ENCODE measurements at regions of chr4 and their contacts with region 1.

Region 1: DNA sequence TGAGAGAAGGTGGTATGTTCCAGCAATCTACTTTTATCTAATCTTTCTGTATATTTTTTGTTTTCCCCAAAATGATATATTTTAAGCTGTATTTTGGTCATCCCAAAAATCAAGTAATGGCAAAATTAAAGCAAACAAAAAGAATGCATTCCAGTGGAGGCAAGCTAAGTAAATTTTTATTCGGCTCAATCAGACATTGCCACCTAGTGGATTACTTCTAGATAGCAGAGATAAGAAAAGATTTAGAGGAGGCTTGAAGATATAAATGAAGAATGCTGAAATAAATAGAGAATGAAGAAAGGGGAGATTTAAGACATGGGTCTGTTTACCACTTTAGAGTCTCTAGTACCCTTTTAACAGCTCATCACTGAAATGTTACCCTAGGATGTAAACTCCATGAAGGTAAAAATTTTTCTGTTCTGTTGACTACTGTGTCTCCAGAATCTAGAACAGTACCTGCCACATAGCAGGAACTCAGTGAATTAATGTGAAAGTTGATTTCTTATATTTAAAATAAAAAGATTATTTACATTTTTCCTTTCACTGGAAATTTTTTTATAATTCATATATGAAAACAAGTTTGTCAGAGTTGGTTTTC is 110.9 kb upstream of the ANK2 start:
- DNase-seq: peak in 2 of 4 experiments; percentile 7 to 10
- ATAC-seq: no peak
- H3K4me3 ChIP-seq: no peak overlapping the region
- H3K27ac ChIP-seq: no peak overlapping the region
- H3K4me1 ChIP-seq: no peaks in the 10 kb centered on the region
- H3K27me3 ChIP-seq: no peaks in the 10 kb centered on the region
- CTCF ChIP-seq: peak in 2 of 3 experiments; percentile 26 to 50; a peak in 3 of 6 replicates
- EP300 ChIP-seq: no peak
- POLR2A ChIP-seq: no peak
- RAD21 ChIP-seq: peak; percentile 39 to 43; a peak in 3 of 4 replicates

Region 2: DNA sequence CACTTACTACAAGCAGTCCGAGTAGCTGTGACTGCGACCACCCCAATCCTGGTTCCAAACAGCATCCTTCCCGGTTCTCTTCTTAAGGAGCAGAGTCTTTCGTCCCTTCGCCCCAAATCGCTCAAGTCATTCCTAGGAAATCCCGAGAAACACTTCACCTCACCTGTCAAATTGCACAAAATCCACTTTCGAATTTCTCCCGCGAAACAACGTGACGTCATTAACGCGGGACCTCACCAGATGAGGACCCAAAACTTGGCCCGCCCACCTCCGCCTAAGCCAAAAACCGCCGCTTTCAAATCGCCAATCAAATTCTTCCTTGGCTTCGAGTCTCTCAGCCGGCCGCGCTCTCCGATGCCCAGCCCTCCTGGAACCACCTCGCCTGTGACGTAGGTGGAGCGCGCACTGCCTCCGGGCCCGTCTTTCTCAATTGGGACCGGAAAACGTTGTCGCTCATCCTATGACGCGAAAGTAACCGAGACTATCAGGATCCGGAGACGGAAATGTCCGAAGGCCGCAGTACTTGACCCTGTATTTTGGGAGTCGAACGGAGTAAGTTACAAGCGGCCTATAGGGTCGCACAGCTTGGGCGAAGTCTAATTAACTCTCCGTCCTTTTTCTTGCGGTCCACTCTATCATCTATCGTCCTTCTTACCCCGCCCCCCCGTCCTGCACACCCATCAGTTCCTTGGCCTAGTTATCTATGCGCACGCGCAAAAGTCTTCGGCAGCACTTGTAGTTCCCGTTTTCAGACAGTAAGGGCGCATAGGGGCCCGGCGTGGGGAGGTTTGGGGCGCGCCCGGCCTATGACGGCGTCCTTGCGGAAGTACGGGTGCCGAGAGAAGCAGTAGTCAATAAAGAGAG is 301.6 kb before region 1 on chr4 and contains the starts of genes LARP7 and ZGRF1:
- CTCF ChIA-PET with region 1: interaction called, 8 read pairs
- POLR2A ChIA-PET with region 1: no interaction called
- in situ Hi-C with region 1: no loop called
- intact Hi-C with region 1: loop called (anchors 10 kb)
- DNase-seq: peak; percentile 89 to 98 (median 90)
- ATAC-seq: peak; percentile 95
- H3K4me3 ChIP-seq: peak within 1 kb of the TSS; percentile 87
- H3K27ac ChIP-seq: peak within 1 kb of the TSS; percentile 87
- H3K4me1 ChIP-seq: peaks cover 0 to 2% of the 10 kb centered on the region in 2 experiments; a peak in 2 of 5 replicates
- H3K27me3 ChIP-seq: no peaks in the 10 kb centered on the region
- CTCF ChIP-seq: peak; percentile 79 to 88 (median 80)
- EP300 ChIP-seq: peak; percentile 42; the same call in 1 of the 2 replicates
- POLR2A ChIP-seq: peak; percentile 82
- RAD21 ChIP-seq: no peak
- polyA plus RNA-seq, gene LARP7: 55.5 to 56.0 TPM
- polyA plus RNA-seq, gene ZGRF1: 8.8 to 12.2 TPM

Region 3: GRCh38 chr4:112853662-112854256 is 84.8 kb before region 1 on chr4:
- CTCF ChIA-PET with region 1: no interaction called
- POLR2A ChIA-PET with region 1: no interaction called
- in situ Hi-C with region 1: no loop called
- intact Hi-C with region 1: loop called (anchors 5 kb)
- DNase-seq: no peak
- ATAC-seq: no peak
- H3K4me3 ChIP-seq: no peak overlapping the region
- H3K27ac ChIP-seq: no peak overlapping the region
- H3K4me1 ChIP-seq: no peaks in the 10 kb centered on the region
- H3K27me3 ChIP-seq: no peaks in the 10 kb centered on the region; a peak in 1 of 5 replicates
- CTCF ChIP-seq: no peak; a peak in 1 of 6 replicates
- EP300 ChIP-seq: no peak
- POLR2A ChIP-seq: no peak
- RAD21 ChIP-seq: peak in 1 of 2 experiments; percentile 18; a peak in 1 of 4 replicates

Measured in K562 (cell line).